Endothelial cell of umbilical vein (primary cell): ENCODE measurements at regions of chr15 and their contacts with region 1.

Region 1: DNA sequence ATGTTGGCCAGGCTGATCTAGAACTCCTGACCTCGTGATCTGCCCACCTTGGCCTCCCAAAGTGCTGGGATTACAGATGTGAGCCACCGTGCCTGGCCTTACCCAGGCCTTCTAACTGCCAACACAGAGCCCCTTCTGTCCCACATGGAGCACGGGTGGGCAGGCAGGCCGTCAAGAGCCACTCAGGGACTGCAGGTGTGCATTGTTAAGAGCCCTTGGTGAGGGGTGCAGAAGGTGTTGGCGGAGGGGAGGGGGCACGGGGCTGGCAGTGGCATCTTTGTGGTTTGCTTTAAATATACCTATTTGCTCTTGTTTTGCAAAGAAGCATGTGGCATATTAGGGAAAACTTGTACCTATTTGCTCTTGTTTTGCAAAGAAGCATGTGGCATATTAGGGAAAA is 37.3 kb downstream of the SMAD6 start:
- DNase-seq: no peak
- H3K4me3 ChIP-seq: no peak overlapping the region
- H3K27ac ChIP-seq: no peak overlapping the region
- H3K4me1 ChIP-seq: peaks cover 28% of the 10 kb centered on the region
- H3K27me3 ChIP-seq: no peaks in the 10 kb centered on the region
- CTCF ChIP-seq: no peak
- POLR2A ChIP-seq: no peak

Region 2: GRCh38 chr15:66698318-66698961 is 40.9 kb before region 1 on chr15:
- CTCF ChIA-PET with region 1: no interaction called
- POLR2A ChIA-PET with region 1: no interaction called
- dilution Hi-C with region 1: no loop called
- intact Hi-C with region 1: no loop called
- DNase-seq: peak; percentile 71
- H3K4me3 ChIP-seq: no peak overlapping the region
- H3K27ac ChIP-seq: no peak overlapping the region
- H3K4me1 ChIP-seq: peaks cover 7% of the 10 kb centered on the region
- H3K27me3 ChIP-seq: no peaks in the 10 kb centered on the region
- CTCF ChIP-seq: peak; percentile 88 to 96
- POLR2A ChIP-seq: no peak

Region 3: DNA sequence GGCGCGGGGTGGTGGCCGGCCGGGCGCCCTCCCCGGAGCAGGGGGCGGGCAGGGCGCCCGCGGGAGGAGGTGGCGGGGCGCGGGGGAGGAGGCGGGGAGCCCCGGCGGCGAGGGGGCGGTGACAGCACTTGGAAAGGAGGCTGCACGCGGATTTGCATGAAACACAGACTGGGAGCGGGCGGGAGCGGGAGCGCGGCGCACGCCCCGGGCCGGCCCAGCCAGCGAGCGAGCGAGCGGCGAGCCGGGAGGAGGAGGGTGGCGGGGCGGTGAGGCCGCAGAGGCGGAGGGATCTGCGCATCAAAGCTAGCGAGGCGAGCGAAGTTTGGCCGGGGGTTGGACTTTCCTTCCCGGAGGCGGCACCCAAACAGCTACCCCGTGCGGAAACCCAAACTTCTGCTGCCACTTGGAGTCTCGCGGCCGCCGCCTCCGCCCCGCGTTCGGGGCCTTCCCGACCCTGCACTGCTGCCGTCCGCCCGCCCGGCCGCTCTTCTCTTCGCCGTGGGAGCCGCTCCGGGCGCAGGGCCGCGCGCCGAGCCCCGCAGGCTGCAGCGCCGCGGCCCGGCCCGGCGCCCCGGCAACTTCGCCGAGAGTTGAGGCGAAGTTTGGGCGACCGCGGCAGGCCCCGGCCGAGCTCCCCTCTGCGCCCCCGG is 326.3 kb after region 1 on chr15 and contains the start of gene SMAD3:
- CTCF ChIA-PET with region 1: no interaction called
- POLR2A ChIA-PET with region 1: no interaction called
- dilution Hi-C with region 1: no loop called
- intact Hi-C with region 1: no loop called
- DNase-seq: peak; percentile 93
- H3K4me3 ChIP-seq: peak within 1 kb of the TSS; percentile 57 to 87 (median 83)
- H3K27ac ChIP-seq: peak within 1 kb of the TSS; percentile 89
- H3K4me1 ChIP-seq: peaks cover 31% of the 10 kb centered on the region
- H3K27me3 ChIP-seq: no peaks in the 10 kb centered on the region
- CTCF ChIP-seq: peak in 1 of 2 donors; percentile 6
- POLR2A ChIP-seq: peak; percentile 80
- total RNA-seq, gene SMAD3: 71.7 and 88.2 TPM in 2 replicates

Region 4: GRCh38 chr15:67394873-67395639 is 655.8 kb after region 1 on chr15:
- CTCF ChIA-PET with region 1: no interaction called
- POLR2A ChIA-PET with region 1: interaction called, 12 read pairs
- dilution Hi-C with region 1: no loop called
- intact Hi-C with region 1: no loop called
- DNase-seq: no peak
- H3K4me3 ChIP-seq: no peak overlapping the region
- H3K27ac ChIP-seq: no peak overlapping the region
- H3K4me1 ChIP-seq: no peaks in the 10 kb centered on the region
- H3K27me3 ChIP-seq: no peaks in the 10 kb centered on the region
- CTCF ChIP-seq: no peak
- POLR2A ChIP-seq: no peak